Caco-2 (cell line): ENCODE measurements at regions of chr6 and their contacts with region 1.

Region 1: GRCh38 chr6:31862344-31863227 is at the start of gene NEU1:
- DNase-seq: peak; percentile 99 to 100
- H3K4me3 ChIP-seq: peak within 1 kb of the TSS; percentile 76
- H3K4me3 Mint-ChIP-seq: peak within 1 kb of the TSS; percentile 100
- H3K27ac Mint-ChIP-seq: peak within 1 kb of the TSS; percentile 100
- H3K4me1 ChIP-seq: peaks cover 14% of the 10 kb centered on the region
- H3K4me1 Mint-ChIP-seq: peaks cover 24% of the 10 kb centered on the region
- H3K27me3 ChIP-seq: no peaks in the 10 kb centered on the region
- H3K27me3 Mint-ChIP-seq: no peaks in the 10 kb centered on the region
- CTCF ChIP-seq: no peak
- total RNA-seq, gene NEU1: 173 and 176 TPM in 2 replicates

Region 2: DNA sequence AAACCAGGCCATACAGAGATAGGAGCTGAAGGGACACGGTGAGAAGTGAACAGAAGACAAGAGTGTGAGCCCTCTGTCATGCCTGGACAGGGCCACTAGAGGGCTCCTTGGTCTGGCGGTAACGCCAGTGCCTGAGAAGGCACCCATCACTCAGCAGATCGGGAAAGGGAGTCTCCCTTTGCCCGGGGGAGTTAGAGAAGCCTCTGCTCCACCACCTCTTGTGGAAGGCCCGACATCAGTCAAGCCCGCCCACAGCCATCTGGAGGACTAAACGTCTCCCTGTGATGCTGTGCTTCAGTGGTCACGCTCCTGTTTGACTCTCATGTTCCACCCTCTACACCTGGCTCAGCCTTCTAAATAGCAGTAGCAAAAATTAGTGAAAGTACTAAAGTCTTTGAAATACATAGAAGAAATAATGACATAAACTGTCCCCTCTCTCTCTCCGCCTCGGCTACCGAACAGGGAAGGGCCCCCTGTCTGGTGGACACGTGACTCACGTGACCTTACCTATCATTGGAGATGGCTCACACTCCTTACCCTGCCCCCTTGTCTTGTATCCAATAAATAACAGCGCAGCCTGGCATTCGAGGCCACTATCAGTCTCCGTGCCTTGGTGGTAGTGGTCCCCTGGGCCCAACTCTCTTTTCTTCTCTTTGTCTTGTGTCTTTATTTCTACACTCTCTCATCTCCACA is 1450.9 kb before region 1 on chr6:
- CTCF ChIA-PET with region 1: no interaction called
- POLR2A ChIA-PET with region 1: no interaction called
- intact Hi-C with region 1: no loop called
- DNase-seq: peak; percentile 64 to 69
- H3K4me3 ChIP-seq: no peak overlapping the region
- H3K4me3 Mint-ChIP-seq: no peak overlapping the region
- H3K27ac Mint-ChIP-seq: no peak overlapping the region
- H3K4me1 ChIP-seq: no peaks in the 10 kb centered on the region
- H3K4me1 Mint-ChIP-seq: no peaks in the 10 kb centered on the region
- H3K27me3 ChIP-seq: no peaks in the 10 kb centered on the region
- H3K27me3 Mint-ChIP-seq: peaks cover 17% of the 10 kb centered on the region
- CTCF ChIP-seq: peak; percentile 82 to 84

Region 3: GRCh38 chr6:31680840-31681671 is 181.5 kb before region 1 on chr6 and contains the start of gene LY6G5C:
- CTCF ChIA-PET with region 1: interaction called, 3 read pairs
- POLR2A ChIA-PET with region 1: interaction called, 3 read pairs
- intact Hi-C with region 1: loop called (anchors 1 kb)
- DNase-seq: peak; percentile 85 to 87
- H3K4me3 ChIP-seq: peak within 1 kb of the TSS; percentile 49
- H3K4me3 Mint-ChIP-seq: peak within 1 kb of the TSS; percentile 76
- H3K27ac Mint-ChIP-seq: peak within 1 kb of the TSS; percentile 54
- H3K4me1 ChIP-seq: peaks cover 25% of the 10 kb centered on the region
- H3K4me1 Mint-ChIP-seq: peaks cover 17% of the 10 kb centered on the region
- H3K27me3 ChIP-seq: no peaks in the 10 kb centered on the region
- H3K27me3 Mint-ChIP-seq: no peaks in the 10 kb centered on the region
- CTCF ChIP-seq: peak; percentile 66 to 81
- total RNA-seq, gene LY6G5C: 2.0 and 2.9 TPM in 2 replicates

Region 4: GRCh38 chr6:31795616-31796298 is 66.8 kb before region 1 on chr6 and contains the start of gene VARS1:
- CTCF ChIA-PET with region 1: interaction called, 10 read pairs
- POLR2A ChIA-PET with region 1: interaction called, 11 read pairs
- intact Hi-C with region 1: no loop called
- DNase-seq: peak; percentile 92 to 95
- H3K4me3 ChIP-seq: peak within 1 kb of the TSS; percentile 80
- H3K4me3 Mint-ChIP-seq: peak within 1 kb of the TSS; percentile 98
- H3K27ac Mint-ChIP-seq: peak within 1 kb of the TSS; percentile 94
- H3K4me1 ChIP-seq: 0 out of 2 replicates have a peak, but pooled peaks cover 3% of the 10 kb centered on the region
- H3K4me1 Mint-ChIP-seq: peaks cover 15% of the 10 kb centered on the region
- H3K27me3 ChIP-seq: no peaks in the 10 kb centered on the region
- H3K27me3 Mint-ChIP-seq: no peaks in the 10 kb centered on the region
- CTCF ChIP-seq: peak; percentile 78 to 94
- total RNA-seq, gene VARS1: 132 and 135 TPM in 2 replicates

Region 5: DNA sequence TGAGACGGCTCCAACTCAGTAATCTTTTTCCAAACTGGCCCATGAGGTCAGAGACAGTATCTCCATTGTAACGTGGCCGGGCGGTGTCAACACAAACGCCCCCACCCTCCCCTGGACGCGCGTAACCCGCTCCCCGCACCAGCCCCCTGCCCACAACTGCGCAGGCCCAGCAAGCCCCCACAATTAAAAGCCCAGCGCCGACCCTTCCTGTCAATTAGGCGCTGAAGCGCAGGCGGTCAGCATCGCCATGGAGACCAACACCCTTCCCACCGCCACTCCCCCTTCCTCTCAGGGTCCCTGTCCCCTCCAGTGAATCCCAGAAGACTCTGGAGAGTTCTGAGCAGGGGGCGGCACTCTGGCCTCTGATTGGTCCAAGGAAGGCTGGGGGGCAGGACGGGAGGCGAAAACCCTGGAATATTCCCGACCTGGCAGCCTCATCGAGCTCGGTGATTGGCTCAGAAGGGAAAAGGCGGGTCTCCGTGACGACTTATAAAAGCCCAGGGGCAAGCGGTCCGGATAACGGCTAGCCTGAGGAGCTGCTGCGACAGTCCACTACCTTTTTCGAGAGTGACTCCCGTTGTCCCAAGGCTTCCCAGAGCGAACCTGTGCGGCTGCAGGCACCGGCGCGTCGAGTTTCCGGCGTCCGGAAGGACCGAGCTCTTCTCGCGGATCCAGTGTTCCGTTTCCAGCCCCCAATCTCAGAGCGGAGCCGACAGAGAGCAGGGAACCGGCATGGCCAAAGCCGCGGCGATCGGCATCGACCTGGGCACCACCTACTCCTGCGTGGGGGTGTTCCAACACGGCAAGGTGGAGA is 47.4 kb before region 1 on chr6 and contains the starts of genes HSPA1A and HSPA1L:
- CTCF ChIA-PET with region 1: interaction called, 3 read pairs
- POLR2A ChIA-PET with region 1: interaction called, 33 read pairs
- intact Hi-C with region 1: no loop called
- DNase-seq: peak; percentile 97 to 99
- H3K4me3 ChIP-seq: peak within 1 kb of the TSS; percentile 38
- H3K4me3 Mint-ChIP-seq: peak within 1 kb of the TSS; percentile 89
- H3K27ac Mint-ChIP-seq: peak within 1 kb of the TSS; percentile 96
- H3K4me1 ChIP-seq: peaks cover 30% of the 10 kb centered on the region
- H3K4me1 Mint-ChIP-seq: peaks cover 12% of the 10 kb centered on the region
- H3K27me3 ChIP-seq: no peaks in the 10 kb centered on the region
- H3K27me3 Mint-ChIP-seq: no peaks in the 10 kb centered on the region
- CTCF ChIP-seq: no peak
- total RNA-seq, gene HSPA1A: 77.3 and 96.9 TPM in 2 replicates
- total RNA-seq, gene HSPA1L: 0.86 and 1.6 TPM in 2 replicates

Region 6: GRCh38 chr6:31834434-31835198 is 28.0 kb before region 1 on chr6:
- CTCF ChIA-PET with region 1: interaction called, 8 read pairs
- POLR2A ChIA-PET with region 1: interaction called, 20 read pairs
- intact Hi-C with region 1: loop called (anchors 1 kb)
- DNase-seq: peak; percentile 90
- H3K4me3 ChIP-seq: peak overlapping the region; percentile 86
- H3K4me3 Mint-ChIP-seq: peak overlapping the region; percentile 96
- H3K27ac Mint-ChIP-seq: peak overlapping the region; percentile 99
- H3K4me1 ChIP-seq: peaks cover 13% of the 10 kb centered on the region
- H3K4me1 Mint-ChIP-seq: peaks cover 18% of the 10 kb centered on the region
- H3K27me3 ChIP-seq: no peaks in the 10 kb centered on the region
- H3K27me3 Mint-ChIP-seq: no peaks in the 10 kb centered on the region
- CTCF ChIP-seq: no peak

Region 7: GRCh38 chr6:31901953-31902643 is 39.5 kb after region 1 on chr6 and contains the start of gene ZBTB12:
- CTCF ChIA-PET with region 1: interaction called, 4 read pairs
- POLR2A ChIA-PET with region 1: interaction called, 18 read pairs
- intact Hi-C with region 1: loop called (anchors 1 kb)
- DNase-seq: peak; percentile 92 to 94
- H3K4me3 ChIP-seq: peak within 1 kb of the TSS; percentile 68
- H3K4me3 Mint-ChIP-seq: peak within 1 kb of the TSS; percentile 73
- H3K27ac Mint-ChIP-seq: peak within 1 kb of the TSS; percentile 58
- H3K4me1 ChIP-seq: peaks cover 19% of the 10 kb centered on the region
- H3K4me1 Mint-ChIP-seq: peaks cover 20% of the 10 kb centered on the region
- H3K27me3 ChIP-seq: no peaks in the 10 kb centered on the region
- H3K27me3 Mint-ChIP-seq: no peaks in the 10 kb centered on the region
- CTCF ChIP-seq: no peak
- total RNA-seq, gene ZBTB12: 9.6 and 11.7 TPM in 2 replicates